Endothelial cell of umbilical vein (primary cell): ENCODE measurements at regions of chr13 and their contacts with region 1.

Region 1: GRCh38 chr13:114110091-114110829 is 22.2 kb downstream of the RASA3 start:
- DNase-seq: peak; percentile 81
- H3K4me3 ChIP-seq: no peak overlapping the region
- H3K27ac ChIP-seq: peak overlapping the region; percentile 44
- H3K4me1 ChIP-seq: peaks cover 37% of the 10 kb centered on the region
- H3K27me3 ChIP-seq: no peaks in the 10 kb centered on the region
- CTCF ChIP-seq: peak; percentile 38 to 58
- POLR2A ChIP-seq: no peak

Region 2: GRCh38 chr13:114053026-114053425 is 57.2 kb before region 1 on chr13:
- CTCF ChIA-PET with region 1: interaction called, 5 read pairs
- POLR2A ChIA-PET with region 1: no interaction called
- dilution Hi-C with region 1: loop called (anchors 10 kb)
- intact Hi-C with region 1: no loop called
- DNase-seq: no peak
- H3K4me3 ChIP-seq: no peak overlapping the region
- H3K27ac ChIP-seq: no peak overlapping the region
- H3K4me1 ChIP-seq: peaks cover 15% of the 10 kb centered on the region
- H3K27me3 ChIP-seq: no peaks in the 10 kb centered on the region
- CTCF ChIP-seq: no peak
- POLR2A ChIP-seq: no peak